PC-9 (cell line): ENCODE measurements at regions of chr3 and their contacts with region 1.

Region 1: GRCh38 chr3:138915503-138916498 is 31.1 kb downstream of the FOXL2 start:
- DNase-seq: peak; percentile 83 to 97
- H3K4me3 ChIP-seq: peak overlapping the region; percentile 75
- H3K27ac ChIP-seq: peak overlapping the region; percentile 88
- H3K4me1 ChIP-seq: peaks cover 52% of the 10 kb centered on the region
- H3K27me3 ChIP-seq: no peaks in the 10 kb centered on the region
- CTCF ChIP-seq: peak; percentile 82

Region 2: DNA sequence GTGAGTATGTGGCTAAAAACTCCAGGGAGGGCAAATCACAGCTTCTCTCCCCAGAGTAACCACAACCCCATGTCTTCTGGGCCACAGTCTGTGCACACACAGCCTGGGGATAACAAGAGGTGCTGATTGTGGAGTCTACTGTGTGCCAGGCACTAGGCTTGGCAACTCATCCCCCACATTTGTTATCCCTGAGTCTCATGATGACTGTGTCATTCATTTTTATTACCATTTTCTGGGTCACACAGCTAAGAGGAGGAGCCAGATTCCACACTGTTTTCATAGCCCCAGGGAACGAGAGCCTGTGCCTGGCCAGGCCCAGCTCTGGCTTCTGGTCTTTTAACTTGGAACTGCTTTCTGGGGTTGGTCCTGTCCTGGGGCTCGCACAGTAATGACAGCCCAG is 446.9 kb before region 1 on chr3:
- CTCF ChIA-PET with region 1: interaction called, 14 read pairs
- POLR2A ChIA-PET with region 1: no interaction called
- intact Hi-C with region 1: no loop called
- DNase-seq: no peak
- H3K4me3 ChIP-seq: no peak overlapping the region
- H3K27ac ChIP-seq: no peak overlapping the region
- H3K4me1 ChIP-seq: no peaks in the 10 kb centered on the region
- H3K27me3 ChIP-seq: no peaks in the 10 kb centered on the region
- CTCF ChIP-seq: no peak

Region 3: DNA sequence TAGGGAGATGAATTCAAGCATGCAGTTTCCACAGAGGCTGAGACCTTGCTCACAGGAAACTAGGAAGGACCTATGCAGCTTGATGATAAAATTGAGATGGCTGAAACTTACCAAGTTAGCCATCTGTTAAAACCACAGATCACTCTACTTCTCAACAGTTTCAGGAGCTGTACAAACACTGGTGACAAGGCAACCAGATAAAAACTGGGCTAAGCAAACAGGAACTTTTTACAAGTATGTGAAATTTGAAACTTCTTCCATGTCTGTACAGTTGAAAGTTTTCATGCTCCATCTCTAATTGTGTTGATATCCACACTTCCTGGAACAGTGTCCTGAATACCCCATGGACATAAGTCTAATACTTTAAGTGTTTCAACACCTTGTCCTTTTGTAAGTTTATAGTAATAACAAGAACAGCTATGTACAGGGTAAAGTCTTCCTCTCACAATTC is 229.0 kb before region 1 on chr3:
- CTCF ChIA-PET with region 1: interaction called, 12 read pairs
- POLR2A ChIA-PET with region 1: no interaction called
- intact Hi-C with region 1: no loop called
- DNase-seq: peak; percentile 37 to 92
- H3K4me3 ChIP-seq: no peak overlapping the region
- H3K27ac ChIP-seq: peak overlapping the region; percentile 65
- H3K4me1 ChIP-seq: peaks cover 27% of the 10 kb centered on the region
- H3K27me3 ChIP-seq: no peaks in the 10 kb centered on the region
- CTCF ChIP-seq: no peak

Region 4: DNA sequence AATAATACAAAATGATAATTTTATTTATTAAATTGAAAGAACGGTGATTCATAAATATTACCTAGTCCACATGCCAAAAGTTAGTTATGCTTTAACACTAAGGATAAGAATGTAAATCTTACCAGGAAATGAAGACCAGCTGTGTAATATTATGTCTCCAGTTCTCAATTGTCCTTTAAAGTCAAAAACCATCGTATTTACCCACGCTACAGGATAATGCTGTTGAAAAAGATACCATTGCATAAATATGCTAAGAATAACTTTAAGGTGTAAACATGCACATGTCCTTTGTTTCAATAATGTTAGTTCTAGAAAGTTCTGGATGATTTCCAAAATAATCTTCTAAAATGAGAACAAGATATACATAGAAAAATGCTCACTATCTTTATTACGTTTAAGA is 203.7 kb before region 1 on chr3:
- CTCF ChIA-PET with region 1: interaction called, 9 read pairs
- POLR2A ChIA-PET with region 1: interaction called, 25 read pairs
- intact Hi-C with region 1: no loop called
- DNase-seq: no peak
- H3K4me3 ChIP-seq: no peak overlapping the region
- H3K27ac ChIP-seq: no peak overlapping the region
- H3K4me1 ChIP-seq: no peaks in the 10 kb centered on the region
- H3K27me3 ChIP-seq: no peaks in the 10 kb centered on the region
- CTCF ChIP-seq: no peak

Region 5: DNA sequence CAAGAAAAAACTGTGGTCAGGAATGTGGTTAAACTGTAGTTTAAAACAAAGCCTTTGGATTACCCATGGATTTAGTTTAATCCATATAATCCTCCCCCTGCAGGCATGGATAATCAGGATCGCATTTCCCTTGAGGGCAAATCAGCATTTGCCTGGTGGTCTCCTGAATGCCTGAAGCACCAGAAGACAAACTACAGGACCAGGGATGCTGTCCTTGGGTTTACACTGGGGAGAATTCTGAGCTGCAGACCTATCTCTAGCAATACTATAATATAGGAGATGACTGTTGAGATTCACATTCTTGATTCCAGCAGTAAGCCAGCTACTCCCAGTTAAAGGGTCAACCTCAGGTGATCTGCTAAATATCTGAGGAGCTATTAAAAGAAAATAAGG is 91.7 kb before region 1 on chr3:
- CTCF ChIA-PET with region 1: interaction called, 10 read pairs
- POLR2A ChIA-PET with region 1: no interaction called
- intact Hi-C with region 1: no loop called
- DNase-seq: peak in 1 of 2 experiments; percentile 6
- H3K4me3 ChIP-seq: no peak overlapping the region
- H3K27ac ChIP-seq: peak overlapping the region; percentile 54
- H3K4me1 ChIP-seq: peaks cover 14% of the 10 kb centered on the region
- H3K27me3 ChIP-seq: no peaks in the 10 kb centered on the region
- CTCF ChIP-seq: no peak

Region 6: GRCh38 chr3:138842483-138843188 is 73.2 kb before region 1 on chr3:
- CTCF ChIA-PET with region 1: interaction called, 3 read pairs
- POLR2A ChIA-PET with region 1: interaction called, 20 read pairs
- intact Hi-C with region 1: no loop called
- DNase-seq: no peak
- H3K4me3 ChIP-seq: no peak overlapping the region
- H3K27ac ChIP-seq: no peak overlapping the region
- H3K4me1 ChIP-seq: 0 out of 2 replicates have a peak, but pooled peaks cover 8% of the 10 kb centered on the region
- H3K27me3 ChIP-seq: no peaks in the 10 kb centered on the region
- CTCF ChIP-seq: no peak

Region 7: GRCh38 chr3:139074565-139075115 is 158.8 kb after region 1 on chr3:
- CTCF ChIA-PET with region 1: no interaction called
- POLR2A ChIA-PET with region 1: no interaction called
- intact Hi-C with region 1: no loop called
- DNase-seq: no peak
- H3K4me3 ChIP-seq: no peak overlapping the region
- H3K27ac ChIP-seq: no peak overlapping the region
- H3K4me1 ChIP-seq: no peaks in the 10 kb centered on the region
- H3K27me3 ChIP-seq: no peaks in the 10 kb centered on the region; the same call in 1 of the 2 replicates
- CTCF ChIP-seq: no peak

Region 8: DNA sequence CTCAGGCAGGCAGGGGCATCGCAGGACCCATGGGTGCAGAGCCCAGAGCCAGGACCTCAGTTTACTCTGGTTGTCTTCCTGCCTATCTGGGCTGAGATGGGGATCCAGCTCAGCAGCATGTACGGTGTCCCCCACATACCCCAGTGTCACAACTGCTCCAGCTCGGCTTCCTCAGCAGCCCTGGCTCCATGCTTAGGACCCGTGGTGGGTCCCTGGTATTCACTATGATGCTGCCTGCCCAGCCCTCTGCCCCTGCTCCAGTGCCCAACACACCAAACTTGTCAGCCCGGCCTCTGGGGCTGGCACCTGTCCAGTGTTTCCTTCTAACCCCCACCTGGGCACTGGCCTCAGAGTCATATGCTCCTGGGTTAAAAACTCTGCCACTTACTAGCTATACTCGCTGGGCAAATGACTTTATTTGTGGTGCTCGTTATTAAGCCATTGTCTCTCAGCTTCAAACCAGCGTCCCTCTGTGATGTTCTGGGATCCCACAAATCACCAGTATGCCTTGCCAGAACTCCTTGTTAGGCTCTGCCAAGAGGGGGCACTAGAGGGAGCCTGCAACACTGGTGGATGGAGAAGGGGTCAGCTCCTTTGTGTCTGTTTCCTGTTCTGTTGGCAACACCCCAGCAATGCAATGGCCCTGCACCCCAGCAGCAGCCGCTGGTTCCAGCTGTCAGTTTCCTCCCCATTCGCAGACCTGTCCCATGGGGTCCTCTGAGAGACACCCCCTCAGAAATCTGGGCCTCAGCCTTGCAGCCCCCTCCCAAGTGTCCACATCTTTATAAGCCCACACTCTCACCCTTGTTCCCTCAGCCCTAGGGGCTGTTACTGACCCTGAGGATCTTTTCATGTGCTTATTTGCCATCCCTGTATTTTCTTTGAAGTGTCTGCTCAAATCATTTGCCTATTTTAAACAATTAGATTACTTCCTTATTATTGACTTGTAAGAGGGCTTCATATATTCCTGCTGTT is 403.9 kb after region 1 on chr3:
- CTCF ChIA-PET with region 1: interaction called, 10 read pairs
- POLR2A ChIA-PET with region 1: no interaction called
- intact Hi-C with region 1: no loop called
- DNase-seq: no peak
- H3K4me3 ChIP-seq: no peak overlapping the region
- H3K27ac ChIP-seq: no peak overlapping the region
- H3K4me1 ChIP-seq: peaks cover 32% of the 10 kb centered on the region
- H3K27me3 ChIP-seq: no peaks in the 10 kb centered on the region
- CTCF ChIP-seq: peak; percentile 40; the same call in 1 of the 2 replicates